B cell (primary cell): ENCODE measurements at regions of chr11 and their contacts with region 1.

Region 1: GRCh38 chr11:45846974-45847910 is at the start of gene CRY2:
- DNase-seq: peak; percentile 99
- ATAC-seq: peak; percentile 89
- H3K4me3 ChIP-seq: peak within 1 kb of the TSS; percentile 76 to 93 (median 90)
- H3K4me3 Mint-ChIP-seq: peak within 1 kb of the TSS; percentile 87
- H3K27ac ChIP-seq: peak within 1 kb of the TSS; percentile 83 to 93
- H3K27ac Mint-ChIP-seq: peak within 1 kb of the TSS; percentile 95
- H3K4me1 ChIP-seq: peaks cover 32 to 43% of the 10 kb centered on the region in 2 donors
- H3K4me1 Mint-ChIP-seq: peaks cover 64% of the 10 kb centered on the region
- H3K27me3 ChIP-seq: no peaks in the 10 kb centered on the region
- H3K27me3 Mint-ChIP-seq: no peaks in the 10 kb centered on the region
- CTCF ChIP-seq: no peak
- total RNA-seq, gene CRY2: 65.1 and 77.9 TPM in 2 replicates

Region 2: DNA sequence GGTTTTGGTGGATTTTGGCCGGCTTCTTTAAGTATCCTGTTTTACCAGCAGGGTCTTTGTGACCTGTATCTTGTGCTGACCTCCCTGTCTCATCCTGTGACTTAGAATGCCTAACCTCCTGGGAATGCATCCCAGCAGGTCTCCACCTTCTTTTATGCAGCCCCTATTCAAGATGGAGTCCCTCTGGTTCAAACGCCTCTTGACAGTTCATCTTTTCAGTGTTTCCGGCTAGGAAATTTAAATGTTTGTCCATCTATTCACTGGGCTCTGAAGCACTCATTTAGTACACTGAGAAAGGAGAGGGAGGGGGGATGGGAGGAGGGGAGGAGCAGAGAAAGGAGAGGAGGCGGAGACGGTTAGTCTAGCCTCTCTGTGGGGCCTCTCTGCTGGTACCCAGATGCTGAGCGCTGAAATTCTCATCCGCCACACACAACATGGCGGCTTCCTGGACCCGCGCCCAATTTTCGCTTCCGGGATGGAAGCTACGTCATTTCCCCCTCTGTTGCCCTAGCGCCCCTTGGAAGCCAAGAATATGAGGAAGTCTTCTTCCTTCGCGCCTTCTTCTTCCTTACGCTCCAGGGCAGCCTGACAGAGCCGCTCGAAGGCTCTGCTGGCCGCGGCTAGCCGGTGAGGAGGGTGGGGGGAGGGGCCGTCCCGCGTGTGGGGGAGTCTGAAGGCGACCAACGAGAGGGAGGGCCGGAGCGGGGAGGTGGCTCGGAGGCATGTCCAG is 492.1 kb before region 1 on chr11:
- CTCF ChIA-PET with region 1: no interaction called
- POLR2A ChIA-PET with region 1: no interaction called
- intact Hi-C with region 1: loop called (anchors 2 kb)
- DNase-seq: peak; percentile 94
- ATAC-seq: peak; percentile 96
- H3K4me3 ChIP-seq: peak overlapping the region; percentile 22 to 68 (median 63)
- H3K4me3 Mint-ChIP-seq: peak overlapping the region; percentile 83
- H3K27ac ChIP-seq: peak overlapping the region; percentile 43 to 64
- H3K27ac Mint-ChIP-seq: peak overlapping the region; percentile 90
- H3K4me1 ChIP-seq: peaks cover 13 to 17% of the 10 kb centered on the region in 2 donors
- H3K4me1 Mint-ChIP-seq: peaks cover 15% of the 10 kb centered on the region
- H3K27me3 ChIP-seq: peaks cover 0 to 6% (median 0%) of the 10 kb centered on the region in 4 experiments
- H3K27me3 Mint-ChIP-seq: peaks cover 30% of the 10 kb centered on the region
- CTCF ChIP-seq: no peak

Region 3: DNA sequence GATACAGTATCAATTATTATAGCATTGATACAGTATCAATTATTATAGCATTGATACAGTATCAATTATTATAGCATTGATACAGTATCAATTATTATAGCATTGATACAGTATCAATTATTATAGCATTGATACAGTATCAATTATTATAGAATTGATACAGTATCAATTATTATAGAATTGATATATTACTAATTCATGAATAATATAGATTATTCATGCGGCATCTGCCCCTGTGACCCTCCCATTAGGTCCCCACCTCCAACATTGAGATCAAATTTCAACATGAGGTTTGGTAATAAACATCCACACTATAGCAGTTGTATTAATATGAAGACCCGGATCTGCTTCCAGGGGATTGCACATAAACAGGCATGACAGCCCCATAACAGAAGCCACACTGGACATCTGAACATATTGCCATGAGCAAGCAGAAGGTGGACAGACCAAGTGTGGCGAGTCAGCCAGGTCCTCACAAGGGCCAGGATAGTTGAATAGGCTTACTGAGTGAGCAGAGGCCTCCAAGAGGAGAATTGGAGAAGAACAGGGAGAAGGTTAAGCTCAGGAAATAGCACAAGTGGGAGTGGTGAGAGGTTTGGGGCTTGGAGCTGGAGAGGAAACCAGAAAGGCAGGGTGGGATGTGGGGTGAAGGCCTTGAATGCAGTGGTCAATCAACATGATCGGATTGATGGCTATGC is 31.6 kb before region 1 on chr11:
- CTCF ChIA-PET with region 1: interaction called, 13 read pairs
- POLR2A ChIA-PET with region 1: interaction called, 4 read pairs
- intact Hi-C with region 1: loop called (anchors 1 kb)
- DNase-seq: no peak
- ATAC-seq: no peak
- H3K4me3 ChIP-seq: no peak overlapping the region
- H3K4me3 Mint-ChIP-seq: no peak overlapping the region
- H3K27ac ChIP-seq: no peak overlapping the region
- H3K27ac Mint-ChIP-seq: peak overlapping the region; percentile 68
- H3K4me1 ChIP-seq: peaks cover 19 to 33% of the 10 kb centered on the region in 2 donors
- H3K4me1 Mint-ChIP-seq: peaks cover 35% of the 10 kb centered on the region
- H3K27me3 ChIP-seq: no peaks in the 10 kb centered on the region
- H3K27me3 Mint-ChIP-seq: no peaks in the 10 kb centered on the region
- CTCF ChIP-seq: no peak

Region 4: GRCh38 chr11:45899448-45900173 is 52.4 kb after region 1 on chr11:
- CTCF ChIA-PET with region 1: interaction called, 3 read pairs
- POLR2A ChIA-PET with region 1: no interaction called
- intact Hi-C with region 1: loop called (anchors 1 kb)
- DNase-seq: peak; percentile 89
- ATAC-seq: peak; percentile 82
- H3K4me3 ChIP-seq: peak overlapping the region in 4 of 5 experiments; percentile 37 to 59 (median 50)
- H3K4me3 Mint-ChIP-seq: peak overlapping the region; percentile 81
- H3K27ac ChIP-seq: peak overlapping the region in 1 of 2 donors; percentile 43
- H3K27ac Mint-ChIP-seq: peak overlapping the region; percentile 37
- H3K4me1 ChIP-seq: peaks cover 12 to 17% of the 10 kb centered on the region in 2 donors
- H3K4me1 Mint-ChIP-seq: peaks cover 12% of the 10 kb centered on the region
- H3K27me3 ChIP-seq: peaks cover 0 to 43% (median 21%) of the 10 kb centered on the region in 4 experiments
- H3K27me3 Mint-ChIP-seq: peaks cover 23% of the 10 kb centered on the region
- CTCF ChIP-seq: no peak

Region 5: DNA sequence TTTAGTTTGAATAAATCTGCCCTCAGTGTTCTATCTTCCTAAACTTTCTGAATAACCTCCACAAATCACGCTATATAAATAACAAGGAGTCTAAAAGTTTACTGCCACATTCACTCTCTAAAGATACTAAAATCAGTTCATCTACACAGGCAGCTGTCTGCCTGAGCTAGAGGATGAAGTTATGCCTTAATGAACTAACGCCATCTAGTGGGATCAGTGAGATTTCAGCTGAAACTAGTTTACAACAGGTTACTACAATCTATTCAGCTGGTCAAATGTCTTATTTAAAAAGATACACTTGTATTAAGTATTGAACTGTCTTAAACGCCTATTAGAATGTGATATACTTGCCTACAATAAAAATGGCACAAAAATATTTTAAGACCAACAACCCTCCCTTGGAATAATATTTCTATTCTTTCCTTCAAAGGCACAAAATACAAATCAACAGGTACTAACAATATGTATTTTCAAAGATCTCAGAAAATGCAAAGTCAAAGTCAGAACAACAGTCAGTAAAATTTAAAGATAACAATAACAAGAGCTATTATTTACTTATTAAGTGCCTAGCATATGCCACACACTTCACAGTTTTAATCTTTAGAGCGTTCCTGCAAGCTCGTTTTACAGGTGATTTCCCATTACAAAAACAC is 159.3 kb after region 1 on chr11:
- CTCF ChIA-PET with region 1: interaction called, 50 read pairs
- POLR2A ChIA-PET with region 1: no interaction called
- intact Hi-C with region 1: loop called (anchors 1 kb)
- DNase-seq: peak; percentile 79
- ATAC-seq: peak; percentile 82
- H3K4me3 ChIP-seq: no peak overlapping the region
- H3K4me3 Mint-ChIP-seq: no peak overlapping the region
- H3K27ac ChIP-seq: no peak overlapping the region
- H3K27ac Mint-ChIP-seq: no peak overlapping the region
- H3K4me1 ChIP-seq: no peaks in the 10 kb centered on the region
- H3K4me1 Mint-ChIP-seq: peaks cover 1% of the 10 kb centered on the region
- H3K27me3 ChIP-seq: no peaks in the 10 kb centered on the region
- H3K27me3 Mint-ChIP-seq: no peaks in the 10 kb centered on the region
- CTCF ChIP-seq: peak; percentile 84

Region 6: GRCh38 chr11:47051217-47051616 is 1204.0 kb after region 1 on chr11:
- CTCF ChIA-PET with region 1: no interaction called
- POLR2A ChIA-PET with region 1: no interaction called
- intact Hi-C with region 1: no loop called
- DNase-seq: no peak
- ATAC-seq: no peak
- H3K4me3 ChIP-seq: no peak overlapping the region
- H3K4me3 Mint-ChIP-seq: no peak overlapping the region
- H3K27ac ChIP-seq: no peak overlapping the region
- H3K27ac Mint-ChIP-seq: no peak overlapping the region
- H3K4me1 ChIP-seq: no peaks in the 10 kb centered on the region
- H3K4me1 Mint-ChIP-seq: peaks cover 3% of the 10 kb centered on the region
- H3K27me3 ChIP-seq: no peaks in the 10 kb centered on the region
- H3K27me3 Mint-ChIP-seq: no peaks in the 10 kb centered on the region
- CTCF ChIP-seq: no peak